Tibial artery (tissue), 4 donors: ENCODE measurements at regions of chr1 and their contacts with region 1.

Region 1: GRCh38 chr1:226827968-226828513 is 42.4 kb upstream of the PSEN2 start:
- DNase-seq: peak; percentile 92 to 97
- H3K4me3 ChIP-seq: peak overlapping the region; percentile 20 to 35
- H3K27ac ChIP-seq: peak overlapping the region; percentile 75 to 76
- H3K4me1 ChIP-seq: peaks cover 0 to 13% (median 9%) of the 10 kb centered on the region in 4 donors
- H3K27me3 ChIP-seq: no peaks in the 10 kb centered on the region
- CTCF ChIP-seq: peak; percentile 95 to 96

Region 2: DNA sequence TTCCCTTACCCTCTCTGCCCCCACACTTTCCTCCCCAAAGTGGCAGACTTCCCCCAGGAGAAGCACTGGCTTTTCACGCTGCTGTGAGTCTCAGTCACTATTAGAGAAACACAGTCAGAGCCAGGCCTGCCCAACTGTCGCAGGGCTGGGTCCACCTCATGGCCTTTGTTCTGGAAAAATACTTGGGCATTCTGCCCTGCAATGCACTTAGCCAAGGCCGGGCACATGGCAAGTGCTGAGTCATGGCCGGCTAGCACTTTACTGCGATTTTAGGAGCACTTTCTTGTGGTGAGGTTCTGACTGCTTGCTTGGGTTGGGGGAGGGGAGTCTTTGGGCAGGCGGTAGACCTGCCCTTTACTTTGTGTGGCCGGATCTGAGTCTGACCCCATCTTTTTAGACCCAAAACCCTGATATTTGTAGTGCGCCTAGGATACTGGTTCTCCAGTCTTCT is 1010.4 kb before region 1 on chr1:
- intact Hi-C with region 1: no loop called
- DNase-seq: peak; percentile 90 to 96
- H3K4me3 ChIP-seq: peak overlapping the region in 1 of 2 donors; percentile 2
- H3K27ac ChIP-seq: peak overlapping the region; percentile 82 to 93
- H3K4me1 ChIP-seq: peaks cover 13 to 77% (median 59%) of the 10 kb centered on the region in 4 donors
- H3K27me3 ChIP-seq: no peaks in the 10 kb centered on the region
- CTCF ChIP-seq: no peak

Region 3: DNA sequence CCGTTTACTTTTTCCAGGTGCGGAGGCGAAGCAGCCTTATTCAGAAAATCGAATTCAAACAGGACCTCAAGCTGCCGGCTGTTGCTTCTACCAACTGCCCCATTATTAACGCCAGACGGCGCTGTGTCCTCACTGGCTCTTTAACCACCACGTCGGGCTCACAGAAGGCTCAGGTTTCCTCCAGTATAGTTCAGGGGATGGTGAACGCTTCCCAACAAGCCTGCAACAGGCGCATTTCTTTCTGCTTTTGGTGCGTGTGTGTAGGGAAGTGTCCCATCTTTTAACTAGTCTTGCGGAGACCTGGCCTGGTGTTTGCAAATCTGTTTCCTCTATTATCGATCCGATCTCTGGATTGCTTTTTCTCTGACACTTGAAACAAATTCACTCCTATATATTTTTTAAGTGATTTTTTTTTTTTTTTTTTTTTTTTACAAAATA is 280.3 kb before region 1 on chr1:
- intact Hi-C with region 1: loop called (anchors 2 kb)
- DNase-seq: peak; percentile 88 to 90
- H3K4me3 ChIP-seq: peak overlapping the region; percentile 57 to 69
- H3K27ac ChIP-seq: peak overlapping the region in 1 of 2 donors; percentile 76
- H3K4me1 ChIP-seq: peaks cover 0 to 36% (median 31%) of the 10 kb centered on the region in 4 donors
- H3K27me3 ChIP-seq: no peaks in the 10 kb centered on the region
- CTCF ChIP-seq: peak; percentile 94

Region 4: DNA sequence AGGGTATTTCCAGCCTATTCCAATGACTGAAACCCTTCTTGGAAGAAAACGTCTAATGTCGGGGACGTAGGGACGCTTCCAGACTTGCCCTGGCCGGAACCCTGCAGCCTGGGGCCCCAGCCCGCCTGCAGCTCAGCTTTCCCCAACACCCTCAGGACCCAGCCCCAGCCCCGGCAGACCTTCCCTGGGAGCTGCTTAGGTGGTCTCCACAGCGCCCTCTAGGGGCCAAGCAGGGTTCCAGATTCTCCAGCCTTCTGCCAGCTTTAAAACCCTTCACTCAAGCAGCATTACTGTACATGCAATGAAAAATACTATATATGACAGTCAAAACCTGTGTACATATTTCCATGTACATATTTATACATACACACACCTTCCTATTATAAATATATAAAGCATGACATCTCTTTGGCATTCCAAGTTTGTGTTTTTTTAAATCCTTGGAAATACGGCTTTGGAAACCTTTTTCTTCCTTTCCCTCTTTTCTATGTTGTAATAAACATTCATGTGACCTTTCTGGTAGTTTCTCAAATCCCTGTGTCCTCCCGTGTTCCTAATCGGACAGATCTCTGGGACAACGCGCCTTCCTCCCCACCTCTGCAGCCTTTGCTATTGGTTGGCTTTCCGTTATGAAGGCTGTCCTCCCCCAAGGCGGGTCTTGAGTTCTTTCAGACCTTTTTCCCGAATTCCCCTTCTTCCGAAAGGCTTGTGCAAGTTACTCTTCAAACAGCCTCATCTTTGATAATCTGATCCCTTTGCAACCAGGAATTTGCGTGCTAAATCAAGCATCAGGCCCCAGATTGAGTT is 219.1 kb before region 1 on chr1:
- intact Hi-C with region 1: no loop called
- DNase-seq: peak; percentile 66 to 71
- H3K4me3 ChIP-seq: no peak overlapping the region
- H3K27ac ChIP-seq: no peak overlapping the region
- H3K4me1 ChIP-seq: peaks cover 0 to 23% (median 14%) of the 10 kb centered on the region in 4 donors
- H3K27me3 ChIP-seq: peaks cover 0 to 2% of the 10 kb centered on the region in 2 donors
- CTCF ChIP-seq: peak; percentile 65 to 87

Region 5: DNA sequence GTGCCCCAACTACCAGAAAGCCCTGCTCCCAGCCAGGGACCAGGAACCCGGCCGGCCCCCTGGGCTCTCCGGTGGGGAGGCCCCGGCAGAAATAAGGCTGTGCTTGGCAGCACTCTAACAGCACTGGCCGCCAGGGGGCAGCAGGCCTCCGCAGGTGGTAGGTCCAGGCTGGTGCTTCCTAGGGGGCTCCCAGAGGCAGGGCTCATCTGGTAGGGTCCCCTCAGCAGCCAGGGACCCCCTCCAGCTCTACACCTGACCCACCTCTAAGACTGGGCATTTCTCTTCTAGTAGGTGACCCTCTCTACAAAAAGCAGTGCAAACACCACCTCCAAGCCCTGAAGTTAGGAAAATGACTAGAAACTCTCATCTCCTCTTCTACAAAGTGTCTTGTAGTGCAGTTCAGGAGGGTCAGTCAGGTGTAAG is 193.9 kb before region 1 on chr1:
- intact Hi-C with region 1: loop called (anchors 2 kb)
- DNase-seq: peak; percentile 80 to 88
- H3K4me3 ChIP-seq: no peak overlapping the region
- H3K27ac ChIP-seq: peak overlapping the region; percentile 40 to 50
- H3K4me1 ChIP-seq: peaks cover 0 to 18% (median 9%) of the 10 kb centered on the region in 4 donors
- H3K27me3 ChIP-seq: no peaks in the 10 kb centered on the region
- CTCF ChIP-seq: peak; percentile 94 to 95

Region 6: GRCh38 chr1:226736908-226737818 is 90.9 kb before region 1 on chr1:
- intact Hi-C with region 1: loop called (anchors 10 kb)
- DNase-seq: peak; percentile 37 to 70
- H3K4me3 ChIP-seq: peak overlapping the region; percentile 73 to 79
- H3K27ac ChIP-seq: peak overlapping the region; percentile 79 to 81
- H3K4me1 ChIP-seq: peaks cover 0 to 50% (median 30%) of the 10 kb centered on the region in 4 donors
- H3K27me3 ChIP-seq: no peaks in the 10 kb centered on the region
- CTCF ChIP-seq: no peak

Region 7: DNA sequence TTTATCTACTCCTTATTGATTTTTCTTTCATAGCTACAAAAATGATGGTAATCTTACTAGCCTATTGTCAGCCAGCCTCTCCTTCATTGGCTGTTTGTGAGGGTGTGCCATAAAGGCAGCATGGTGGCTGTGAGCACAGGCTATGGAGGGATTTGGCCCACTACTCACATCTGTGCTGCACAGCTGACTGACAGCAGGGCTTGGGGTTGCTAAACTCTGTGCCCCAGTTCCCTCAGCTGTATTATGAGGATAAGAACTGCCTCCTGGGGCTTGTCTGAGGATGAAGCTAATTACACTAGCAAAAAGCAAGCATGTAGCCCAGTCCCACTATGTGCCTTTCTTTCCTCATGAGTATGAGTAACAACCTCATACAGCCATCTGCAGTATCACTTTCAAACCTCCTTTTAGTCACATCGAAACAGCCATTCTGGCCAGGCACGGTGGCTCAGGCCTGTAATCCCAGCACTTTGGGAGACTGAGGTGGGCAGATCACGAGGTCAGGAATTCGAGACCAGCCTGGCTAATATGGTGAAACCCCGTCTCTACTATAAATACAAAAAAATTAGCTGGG is 178.3 kb after region 1 on chr1:
- intact Hi-C with region 1: no loop called
- DNase-seq: no peak
- H3K4me3 ChIP-seq: no peak overlapping the region
- H3K27ac ChIP-seq: no peak overlapping the region
- H3K4me1 ChIP-seq: no peaks in the 10 kb centered on the region
- H3K27me3 ChIP-seq: no peaks in the 10 kb centered on the region
- CTCF ChIP-seq: no peak